Mucosa of descending colon (tissue), 3 donors: ENCODE measurements at regions of chr22 and their contacts with region 1.

Region 1: DNA sequence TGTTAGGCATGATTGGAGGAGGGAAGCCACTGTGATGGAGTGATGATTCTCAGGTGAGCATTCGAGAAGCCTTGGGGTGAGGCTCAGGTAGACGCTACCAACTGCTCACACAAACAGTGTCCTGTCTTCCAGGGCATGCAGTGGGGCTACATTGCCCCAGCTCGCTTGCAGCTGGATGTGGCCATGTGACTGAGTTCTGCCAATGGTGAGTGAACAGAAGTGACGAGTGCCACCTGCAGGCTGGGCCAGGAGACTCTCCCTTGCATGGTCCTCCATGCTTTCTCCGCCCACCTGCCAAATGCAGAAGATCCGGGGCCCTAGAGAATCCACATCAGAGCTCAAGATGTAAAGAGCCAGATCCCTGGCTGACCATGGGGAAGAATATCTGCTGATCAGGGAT is 195.9 kb downstream of the BCR start:
- DNase-seq: peak; percentile 46 to 71 (median 69)
- ATAC-seq: peak; percentile 92
- H3K4me3 ChIP-seq: no peak overlapping the region
- H3K4me1 ChIP-seq: no peaks in the 10 kb centered on the region
- CTCF ChIP-seq: peak; percentile 21

Region 2: GRCh38 chr22:23322547-23322946 is 53.7 kb before region 1 on chr22:
- intact Hi-C with region 1: loop called in 1 of 2 experiments (anchors 10 kb)
- DNase-seq: no peak
- ATAC-seq: no peak
- H3K4me3 ChIP-seq: no peak overlapping the region
- H3K4me1 ChIP-seq: no peaks in the 10 kb centered on the region
- CTCF ChIP-seq: no peak